ENCODE measurements at regions of chr10 and their contacts with region 1.

Region 1: GRCh38 chr10:3948843-3949242 is 163.8 kb upstream of the KLF6 start:
- DNase-seq: peak in 1 of 2 donors; percentile 68
- ATAC-seq: peak; percentile 34
- H3K4me3 ChIP-seq: no peak overlapping the region
- H3K27ac ChIP-seq: no peak overlapping the region
- H3K4me1 ChIP-seq: peaks cover 0 to 6% of the 10 kb centered on the region in 2 donors
- H3K27me3 ChIP-seq: no peaks in the 10 kb centered on the region

Region 2: DNA sequence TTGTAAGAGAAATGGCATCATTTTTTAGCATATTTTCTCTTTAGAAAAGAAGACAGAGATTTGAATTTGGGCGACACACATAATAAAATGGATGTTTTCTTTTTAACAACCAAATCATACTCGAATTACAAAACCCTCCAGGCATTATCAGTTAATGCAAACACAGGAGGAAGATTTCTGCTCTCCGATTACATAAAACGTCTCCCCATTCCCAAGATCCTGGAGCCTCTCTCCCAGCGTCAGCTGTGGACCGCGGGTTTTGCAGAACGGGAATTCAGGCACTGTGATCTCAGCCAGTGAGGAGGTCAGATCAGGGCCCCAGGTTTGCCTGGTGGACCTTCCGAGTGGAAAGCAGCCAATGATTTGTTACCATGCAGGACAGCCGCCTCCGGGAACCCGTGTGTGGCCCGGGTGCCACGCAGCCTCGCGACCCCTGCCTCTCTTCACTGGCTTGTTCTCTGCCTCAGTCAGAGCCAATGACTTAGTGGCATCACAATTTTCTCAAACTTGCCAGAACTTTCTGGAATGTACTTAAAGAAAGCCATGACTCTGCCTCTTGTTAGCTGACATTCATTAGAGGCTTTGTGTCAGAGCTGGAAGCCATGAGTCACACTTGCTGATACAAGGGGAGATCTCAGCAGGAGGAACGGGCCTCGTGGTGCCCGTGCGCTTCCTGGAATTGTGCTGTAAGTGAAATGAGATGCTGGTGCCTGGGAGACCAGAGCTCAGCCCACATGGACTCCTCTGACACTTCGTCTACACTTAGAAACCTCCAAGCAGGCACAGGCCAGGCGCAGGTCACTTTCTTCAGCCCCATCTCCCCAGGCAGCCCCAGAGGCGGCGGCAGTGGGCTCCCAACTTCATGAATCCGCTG is 409.9 kb before region 1 on chr10:
- intact Hi-C with region 1: no loop called
- DNase-seq: peak; percentile 80 to 87
- ATAC-seq: peak; percentile 73
- H3K4me3 ChIP-seq: no peak overlapping the region
- H3K27ac ChIP-seq: peak overlapping the region in 1 of 2 donors; percentile 37
- H3K4me1 ChIP-seq: no peaks in the 10 kb centered on the region
- H3K27me3 ChIP-seq: no peaks in the 10 kb centered on the region

Region 3: DNA sequence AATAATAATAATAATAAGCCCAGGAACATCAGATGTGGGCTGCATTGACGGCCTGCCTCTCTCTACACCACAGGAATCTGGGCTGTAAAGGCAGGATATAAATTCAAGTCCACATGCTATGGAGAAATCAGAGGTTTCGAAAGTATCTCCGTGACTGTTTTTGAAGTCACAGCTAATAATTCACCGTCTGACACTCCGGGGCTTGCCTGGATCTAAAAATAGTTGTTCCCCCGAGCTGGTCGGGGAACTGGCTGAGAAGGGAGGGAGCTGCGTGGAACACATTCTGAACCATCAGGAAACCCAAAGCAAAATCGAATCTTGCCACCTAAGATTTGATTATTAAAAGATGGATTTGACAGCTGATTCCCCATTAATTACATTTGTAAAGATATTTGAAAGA is 199.2 kb before region 1 on chr10:
- intact Hi-C with region 1: no loop called
- DNase-seq: peak in 1 of 2 donors; percentile 54
- ATAC-seq: peak; percentile 75
- H3K4me3 ChIP-seq: no peak overlapping the region
- H3K27ac ChIP-seq: no peak overlapping the region
- H3K4me1 ChIP-seq: no peaks in the 10 kb centered on the region
- H3K27me3 ChIP-seq: no peaks in the 10 kb centered on the region

Region 4: GRCh38 chr10:4051011-4051640 is 102.3 kb after region 1 on chr10:
- intact Hi-C with region 1: loop called in 1 of 2 experiments (anchors 5 kb)
- DNase-seq: peak in 1 of 2 donors; percentile 65
- ATAC-seq: peak; percentile 78
- H3K4me3 ChIP-seq: peak overlapping the region; percentile 4 to 8
- H3K27ac ChIP-seq: peak overlapping the region; percentile 26 to 52
- H3K4me1 ChIP-seq: peaks cover 0 to 6% of the 10 kb centered on the region in 2 donors
- H3K27me3 ChIP-seq: no peaks in the 10 kb centered on the region

Region 5: DNA sequence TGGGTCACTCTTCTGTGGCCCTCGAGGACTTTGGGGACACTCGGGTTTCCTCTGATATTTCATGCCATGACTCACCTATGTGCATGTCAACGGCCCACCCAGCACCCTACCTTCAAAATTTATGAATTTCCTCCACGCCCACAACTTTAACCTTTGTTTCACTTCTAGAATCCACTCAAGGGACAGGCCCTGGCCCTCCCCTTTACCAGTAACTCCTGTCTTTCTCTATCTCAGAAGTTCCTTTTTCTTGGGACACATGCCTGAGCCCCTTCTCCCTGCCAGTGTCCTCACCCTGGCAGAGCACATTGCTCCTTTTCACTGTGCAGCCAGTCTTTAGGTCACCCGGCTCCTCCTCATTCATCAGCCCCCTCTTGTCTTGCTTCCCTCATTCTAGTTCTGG is 118.7 kb after region 1 on chr10:
- intact Hi-C with region 1: no loop called
- DNase-seq: no peak
- ATAC-seq: no peak
- H3K4me3 ChIP-seq: no peak overlapping the region
- H3K27ac ChIP-seq: no peak overlapping the region
- H3K4me1 ChIP-seq: no peaks in the 10 kb centered on the region
- H3K27me3 ChIP-seq: no peaks in the 10 kb centered on the region

Region 6: DNA sequence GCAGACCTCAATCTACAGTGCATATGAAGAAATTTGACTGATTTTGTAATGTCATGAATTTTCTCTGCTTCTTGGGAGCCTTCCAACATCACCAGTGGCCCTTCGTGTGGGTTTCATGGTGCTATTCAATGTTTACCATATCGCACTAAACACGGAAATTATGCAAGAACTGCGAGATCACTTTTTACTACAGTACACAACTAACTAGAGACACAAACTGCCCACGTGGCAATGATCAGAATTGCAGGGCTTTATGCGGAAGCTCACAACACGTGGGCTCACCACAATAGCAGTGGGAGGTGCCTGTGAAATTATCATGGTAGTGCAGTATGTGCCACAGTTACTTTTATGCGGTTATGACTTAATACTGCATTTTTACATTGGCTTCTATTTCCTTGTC is 285.8 kb after region 1 on chr10:
- intact Hi-C with region 1: loop called in 1 of 2 experiments (anchors 10 kb)
- DNase-seq: no peak
- ATAC-seq: no peak
- H3K4me3 ChIP-seq: no peak overlapping the region
- H3K27ac ChIP-seq: no peak overlapping the region
- H3K4me1 ChIP-seq: no peaks in the 10 kb centered on the region
- H3K27me3 ChIP-seq: no peaks in the 10 kb centered on the region

Measured in aorta (tissue), 5 donors.